ENCODE measurements at regions of chr2 and their contacts with region 1.

Region 1: DNA sequence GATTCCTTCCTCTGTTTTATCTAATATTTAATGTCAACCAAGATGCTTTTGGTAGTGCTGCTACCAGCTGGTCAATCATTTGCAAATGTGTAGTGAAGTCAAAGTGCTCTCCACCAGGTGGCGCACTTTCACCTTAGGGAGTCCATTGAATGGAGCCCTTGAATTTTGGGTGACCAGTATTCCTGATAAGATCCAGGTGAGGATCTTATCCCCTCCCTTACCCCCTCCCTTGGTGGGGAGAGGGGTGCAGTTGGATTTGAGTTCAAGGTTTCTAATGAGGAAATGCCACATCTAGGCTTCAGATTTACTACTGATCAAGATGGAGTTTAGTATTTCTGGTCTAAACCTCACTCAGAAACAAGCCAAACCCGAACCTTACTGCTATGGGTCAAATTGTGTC is 12.0 kb upstream of the E2F6 start:
- DNase-seq: peak; percentile 86
- H3K4me3 ChIP-seq: no peak overlapping the region
- H3K27ac ChIP-seq: no peak overlapping the region
- H3K4me1 ChIP-seq: peaks cover 4% of the 10 kb centered on the region
- H3K27me3 ChIP-seq: peaks cover 5% of the 10 kb centered on the region
- CTCF ChIP-seq: peak; percentile 89

Region 2: DNA sequence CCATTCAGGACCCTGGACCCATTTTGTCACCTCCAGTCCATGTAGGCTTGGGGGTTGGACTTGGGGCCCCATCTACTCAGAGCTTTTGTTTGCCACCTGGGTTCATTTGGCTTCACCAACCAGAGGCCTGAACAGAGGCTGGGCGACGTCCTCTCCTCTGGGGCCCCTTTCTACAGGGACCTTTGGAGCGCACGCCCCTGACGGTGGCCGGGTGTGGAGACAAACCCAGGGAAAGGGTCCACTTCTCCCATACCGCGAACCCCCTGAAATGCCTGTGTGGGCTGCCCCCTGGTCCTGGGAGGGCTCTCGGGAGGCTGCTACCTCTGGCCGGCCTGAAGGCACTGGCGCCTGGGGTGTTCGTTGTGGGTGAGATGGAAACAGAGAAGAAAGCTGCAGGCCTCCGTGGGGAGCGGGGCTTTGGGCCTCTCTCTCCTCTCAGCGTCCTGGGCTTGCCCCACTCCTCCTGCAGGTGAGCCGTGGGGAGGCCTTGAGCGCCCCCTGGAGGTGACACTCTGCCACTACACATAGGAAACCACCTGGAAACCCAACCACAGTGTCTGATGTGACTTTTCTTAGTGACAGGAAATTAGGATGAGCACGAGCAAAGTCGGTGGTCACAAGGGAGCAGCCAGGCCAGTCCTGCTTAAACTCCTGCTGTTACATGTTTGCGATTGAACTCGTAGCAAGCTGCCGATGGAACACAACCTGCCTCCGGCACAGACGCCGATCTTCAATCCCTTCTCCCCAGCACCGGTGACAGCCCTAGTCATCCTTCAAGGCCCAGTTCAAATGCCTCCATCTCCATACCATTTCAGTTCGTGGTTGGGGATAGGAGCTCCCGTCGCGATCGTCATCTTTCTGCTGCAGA is 204.0 kb after region 1 on chr2:
- CTCF ChIA-PET with region 1: no interaction called
- POLR2A ChIA-PET with region 1: no interaction called
- intact Hi-C with region 1: loop called (anchors 5 kb)
- DNase-seq: peak; percentile 56
- H3K4me3 ChIP-seq: no peak overlapping the region
- H3K27ac ChIP-seq: no peak overlapping the region
- H3K4me1 ChIP-seq: no peaks in the 10 kb centered on the region
- H3K27me3 ChIP-seq: peaks cover 31% of the 10 kb centered on the region
- CTCF ChIP-seq: peak; percentile 97

Region 3: DNA sequence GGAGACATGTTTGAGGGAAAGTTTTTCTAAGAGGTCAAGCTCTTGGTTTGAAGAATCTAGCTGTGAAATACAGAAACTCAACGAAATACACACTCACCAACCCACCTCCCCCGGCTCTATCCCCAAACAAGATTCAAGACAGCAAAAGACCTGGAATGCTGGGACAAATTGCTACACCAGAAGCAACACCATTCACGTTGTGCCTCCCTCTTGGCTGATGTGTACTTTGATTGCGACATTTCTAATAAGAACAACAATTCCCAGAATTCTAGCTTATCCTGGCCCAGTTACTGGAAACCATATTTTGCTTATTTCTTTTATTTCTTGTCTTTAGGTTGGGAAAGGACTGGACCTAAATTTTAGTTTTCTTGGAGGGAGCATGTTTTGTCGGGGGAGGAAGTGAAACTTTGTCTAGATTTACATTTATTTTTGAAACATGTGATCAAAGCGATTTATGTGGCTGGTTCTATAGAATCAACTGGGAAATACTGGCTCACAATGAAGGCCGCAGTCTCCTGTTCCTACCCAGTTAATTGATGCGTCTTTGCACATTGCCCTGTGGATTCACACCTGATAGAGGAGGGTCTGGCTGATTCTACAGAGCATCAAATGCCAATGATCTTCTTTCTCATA is 238.8 kb after region 1 on chr2:
- CTCF ChIA-PET with region 1: no interaction called
- POLR2A ChIA-PET with region 1: no interaction called
- intact Hi-C with region 1: no loop called
- DNase-seq: no peak
- H3K4me3 ChIP-seq: no peak overlapping the region
- H3K27ac ChIP-seq: no peak overlapping the region
- H3K4me1 ChIP-seq: no peaks in the 10 kb centered on the region
- H3K27me3 ChIP-seq: peaks cover 4% of the 10 kb centered on the region
- CTCF ChIP-seq: no peak

Measured in A673 (cell line).